ENCODE measurements at regions of chr2 and their contacts with region 1.

Region 1: GRCh38 chr2:14233365-14233764 is 399.2 kb upstream of the LRATD1 start:
- DNase-seq: no peak
- H3K4me3 ChIP-seq: no peak overlapping the region
- H3K27ac ChIP-seq: no peak overlapping the region
- H3K4me1 ChIP-seq: no peaks in the 10 kb centered on the region
- H3K27me3 ChIP-seq: no peaks in the 10 kb centered on the region
- CTCF ChIP-seq: no peak

Region 2: GRCh38 chr2:13818002-13818401 is 415.4 kb before region 1 on chr2:
- CTCF ChIA-PET with region 1: no interaction called
- POLR2A ChIA-PET with region 1: no interaction called
- intact Hi-C with region 1: no loop called
- DNase-seq: no peak
- H3K4me3 ChIP-seq: no peak overlapping the region
- H3K27ac ChIP-seq: no peak overlapping the region
- H3K4me1 ChIP-seq: no peaks in the 10 kb centered on the region
- H3K27me3 ChIP-seq: no peaks in the 10 kb centered on the region
- CTCF ChIP-seq: no peak

Region 3: GRCh38 chr2:14189929-14190328 is 43.4 kb before region 1 on chr2:
- CTCF ChIA-PET with region 1: no interaction called
- POLR2A ChIA-PET with region 1: no interaction called
- intact Hi-C with region 1: loop called (anchors 1 kb)
- DNase-seq: no peak
- H3K4me3 ChIP-seq: no peak overlapping the region
- H3K27ac ChIP-seq: no peak overlapping the region
- H3K4me1 ChIP-seq: no peaks in the 10 kb centered on the region
- H3K27me3 ChIP-seq: peaks cover 23% of the 10 kb centered on the region
- CTCF ChIP-seq: no peak

Region 4: DNA sequence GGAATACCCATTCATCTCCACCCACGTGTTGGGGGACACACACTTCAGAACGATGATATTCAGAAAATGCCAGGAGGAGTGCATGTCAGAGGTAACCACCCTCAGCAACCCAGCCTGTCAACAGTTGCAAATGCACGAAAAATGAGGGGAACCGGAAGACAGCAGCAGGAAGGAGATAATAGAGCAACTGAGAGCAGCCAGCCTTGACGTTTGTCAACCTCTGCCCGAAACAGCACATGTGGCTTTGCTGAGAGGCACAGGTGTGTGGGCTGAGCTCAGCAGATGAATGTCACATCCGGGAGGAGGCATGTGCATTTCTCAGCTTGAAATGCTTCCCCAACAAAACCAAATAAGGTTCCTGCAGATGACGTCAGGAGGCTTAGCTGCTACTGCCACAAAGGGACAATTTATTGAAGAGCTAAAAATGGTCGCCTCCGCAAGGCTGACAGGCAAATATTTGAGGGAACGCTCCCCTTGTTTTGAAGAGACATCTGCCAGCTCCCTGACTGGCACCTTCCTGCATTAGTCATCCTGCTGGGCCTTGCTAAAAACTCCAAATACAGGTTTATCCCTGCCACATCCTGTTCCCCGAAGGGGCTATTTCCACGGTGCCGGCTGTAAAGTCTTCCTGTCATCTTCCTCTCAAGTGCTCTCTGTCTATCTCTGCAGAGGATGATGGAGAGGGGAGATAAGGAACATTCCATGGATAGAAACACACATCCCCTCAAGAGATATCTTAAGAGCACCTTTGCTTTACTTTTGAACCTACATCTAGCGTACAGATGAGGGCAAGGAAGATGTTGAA is 908.9 kb after region 1 on chr2:
- CTCF ChIA-PET with region 1: no interaction called
- POLR2A ChIA-PET with region 1: no interaction called
- intact Hi-C with region 1: no loop called
- DNase-seq: peak; percentile 54
- H3K4me3 ChIP-seq: peak overlapping the region; percentile 7
- H3K27ac ChIP-seq: no peak overlapping the region
- H3K4me1 ChIP-seq: peaks cover 13% of the 10 kb centered on the region
- H3K27me3 ChIP-seq: no peaks in the 10 kb centered on the region
- CTCF ChIP-seq: no peak